CD8-positive, alpha-beta memory T cell (primary cell): ENCODE measurements at regions of chr9 and their contacts with region 1.

Region 1: GRCh38 chr9:131668439-131669268 is 71.2 kb downstream of the RAPGEF1 start:
- DNase-seq: peak; percentile 48 to 88 (median 63)
- H3K4me3 ChIP-seq: peak overlapping the region; percentile 54
- H3K4me3 Mint-ChIP-seq: peak overlapping the region; percentile 56 to 88 (median 79)
- H3K27ac ChIP-seq: peak overlapping the region; percentile 88
- H3K27ac Mint-ChIP-seq: peak overlapping the region; percentile 95 to 100 (median 99)
- H3K4me1 ChIP-seq: peaks cover 76% of the 10 kb centered on the region
- H3K4me1 Mint-ChIP-seq: peaks cover 93 to 100% (median 100%) of the 10 kb centered on the region in 3 donors
- H3K27me3 ChIP-seq: no peaks in the 10 kb centered on the region
- H3K27me3 Mint-ChIP-seq: no peaks in the 10 kb centered on the region

Region 2: GRCh38 chr9:131709771-131710454 is 41.3 kb after region 1 on chr9:
- CTCF ChIA-PET with region 1: interaction called, 10 read pairs
- POLR2A ChIA-PET with region 1: no interaction called
- DNase-seq: peak in 3 of 5 donors; percentile 14 to 71 (median 65)
- H3K4me3 ChIP-seq: peak overlapping the region; percentile 4
- H3K4me3 Mint-ChIP-seq: peak overlapping the region; percentile 25 to 81 (median 51)
- H3K27ac ChIP-seq: peak overlapping the region; percentile 64
- H3K27ac Mint-ChIP-seq: peak overlapping the region; percentile 90 to 99 (median 96)
- H3K4me1 ChIP-seq: peaks cover 61% of the 10 kb centered on the region
- H3K4me1 Mint-ChIP-seq: peaks cover 72 to 95% (median 91%) of the 10 kb centered on the region in 3 donors
- H3K27me3 ChIP-seq: no peaks in the 10 kb centered on the region
- H3K27me3 Mint-ChIP-seq: no peaks in the 10 kb centered on the region

Region 3: DNA sequence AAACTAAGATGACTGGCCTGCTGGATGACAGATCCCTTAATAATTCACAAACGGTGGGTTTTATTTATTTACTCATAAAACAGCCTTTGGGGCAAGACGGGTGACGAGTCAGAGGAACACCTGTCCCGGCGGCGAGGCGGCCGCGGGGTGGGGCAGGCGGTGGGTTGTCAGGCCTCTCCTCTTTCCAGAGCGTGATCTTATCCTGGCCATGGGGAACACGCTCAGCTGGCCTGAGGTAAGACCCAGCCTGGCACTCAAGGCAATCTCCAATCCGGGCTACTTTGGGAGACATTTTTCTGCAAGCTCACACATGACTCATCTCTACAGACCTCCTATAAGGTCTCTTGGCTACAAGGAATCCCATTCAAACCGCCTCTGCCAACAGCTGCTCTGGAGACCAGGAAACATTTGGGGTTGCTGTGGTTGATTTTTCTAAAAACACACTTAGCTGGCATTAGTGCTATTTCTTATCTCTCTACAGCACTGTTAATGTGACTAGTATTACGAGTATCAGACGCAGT is 64.9 kb after region 1 on chr9:
- CTCF ChIA-PET with region 1: interaction called, 12 read pairs
- POLR2A ChIA-PET with region 1: interaction called, 19 read pairs
- DNase-seq: peak in 4 of 5 donors; percentile 33 to 65 (median 44)
- H3K4me3 ChIP-seq: peak overlapping the region; percentile 52
- H3K4me3 Mint-ChIP-seq: peak overlapping the region; percentile 73 to 90 (median 84)
- H3K27ac ChIP-seq: peak overlapping the region; percentile 61
- H3K27ac Mint-ChIP-seq: peak overlapping the region; percentile 78 to 99 (median 92)
- H3K4me1 ChIP-seq: peaks cover 95% of the 10 kb centered on the region
- H3K4me1 Mint-ChIP-seq: peaks cover 86 to 95% (median 93%) of the 10 kb centered on the region in 3 donors
- H3K27me3 ChIP-seq: no peaks in the 10 kb centered on the region
- H3K27me3 Mint-ChIP-seq: no peaks in the 10 kb centered on the region

Region 4: DNA sequence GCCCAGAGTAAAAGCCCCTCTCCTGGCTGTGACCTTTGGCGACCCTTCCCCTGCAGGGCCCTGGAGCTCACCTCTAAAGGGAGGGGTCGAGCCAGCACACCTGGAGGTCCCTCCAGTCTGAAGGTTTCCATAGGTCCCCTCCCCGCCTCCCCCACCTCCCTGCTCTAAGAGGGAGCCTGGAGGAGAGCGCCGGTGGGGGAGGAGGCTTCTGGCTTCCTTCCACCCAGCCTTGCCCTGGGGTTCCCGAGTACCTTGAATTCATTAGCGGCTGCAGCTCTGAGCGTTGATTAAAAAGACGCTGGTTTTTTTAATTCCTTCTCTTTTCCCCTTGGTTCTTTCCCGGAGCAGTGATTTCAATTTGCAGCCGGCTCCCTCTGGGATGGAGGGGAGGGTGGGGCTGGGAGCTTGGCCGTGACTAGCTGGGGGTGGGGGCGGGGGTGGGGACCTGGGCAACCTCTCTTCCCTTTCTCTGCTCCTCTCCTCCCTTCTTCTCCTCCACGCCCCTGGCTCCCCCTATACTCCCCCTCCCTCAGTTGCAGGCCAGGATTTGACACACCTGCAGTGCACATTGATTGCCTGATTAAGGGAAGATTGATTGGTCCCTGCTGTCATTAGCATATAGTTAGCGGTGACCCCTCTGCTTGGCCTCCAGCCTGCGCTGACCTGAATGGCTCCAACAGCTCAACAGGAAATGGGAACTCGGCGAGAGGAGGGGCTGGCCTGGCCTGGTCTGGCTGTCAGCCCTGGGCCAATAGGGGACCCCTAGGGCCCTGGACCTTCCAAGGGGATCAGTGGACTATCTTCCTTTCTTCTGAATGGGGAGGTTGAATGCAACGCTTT is 138.7 kb after region 1 on chr9:
- CTCF ChIA-PET with region 1: no interaction called
- POLR2A ChIA-PET with region 1: no interaction called
- DNase-seq: no peak
- H3K4me3 ChIP-seq: no peak overlapping the region
- H3K4me3 Mint-ChIP-seq: no peak overlapping the region
- H3K27ac ChIP-seq: no peak overlapping the region
- H3K27ac Mint-ChIP-seq: no peak overlapping the region
- H3K4me1 ChIP-seq: no peaks in the 10 kb centered on the region
- H3K4me1 Mint-ChIP-seq: no peaks in the 10 kb centered on the region
- H3K27me3 ChIP-seq: no peaks in the 10 kb centered on the region
- H3K27me3 Mint-ChIP-seq: peaks cover 18 to 52% of the 10 kb centered on the region in 2 donors